Panc1 (cell line): ENCODE measurements at regions of chr17 and their contacts with region 1.

Region 1: DNA sequence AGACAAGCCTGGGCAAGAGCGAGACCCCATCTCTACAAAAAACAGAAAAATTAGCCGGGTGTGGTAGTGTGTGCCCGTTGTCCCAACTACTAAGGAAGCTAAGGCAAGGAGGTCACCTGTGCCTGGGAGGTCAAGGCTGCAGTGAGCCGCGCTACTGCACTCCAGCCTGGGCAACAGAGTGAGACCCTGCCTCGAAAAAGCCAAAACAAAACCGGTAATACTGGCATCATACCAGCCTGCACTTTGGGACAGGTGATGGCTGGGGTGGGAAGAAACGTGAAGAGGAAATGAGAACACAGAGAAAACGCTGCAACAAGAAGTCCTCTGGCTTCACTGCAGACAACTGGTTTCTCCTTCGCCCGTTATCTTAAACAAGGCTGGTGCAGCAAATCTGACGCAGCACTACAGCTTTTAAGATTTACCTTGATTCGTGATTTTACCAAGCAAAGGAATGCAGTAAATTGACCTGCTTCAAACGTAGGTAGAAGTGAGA is 725 bp upstream of the CASC3 start:
- DNase-seq: no peak
- ATAC-seq: peak; percentile 3
- H3K4me3 ChIP-seq: peak overlapping the region; percentile 68 to 93
- H3K27ac ChIP-seq: peak overlapping the region; percentile 96
- H3K4me1 ChIP-seq: peaks cover 15% of the 10 kb centered on the region
- H3K27me3 ChIP-seq: no peaks in the 10 kb centered on the region
- CTCF ChIP-seq: no peak

Region 2: GRCh38 chr17:40307001-40307730 is 167.6 kb after region 1 on chr17:
- CTCF ChIA-PET with region 1: no interaction called
- POLR2A ChIA-PET with region 1: no interaction called
- in situ Hi-C with region 1: no loop called
- intact Hi-C with region 1: no loop called
- DNase-seq: no peak
- ATAC-seq: peak; percentile 43
- H3K4me3 ChIP-seq: no peak overlapping the region
- H3K27ac ChIP-seq: peak overlapping the region; percentile 95
- H3K4me1 ChIP-seq: peaks cover 81% of the 10 kb centered on the region
- H3K27me3 ChIP-seq: no peaks in the 10 kb centered on the region
- CTCF ChIP-seq: no peak

Region 3: GRCh38 chr17:40317880-40318829 is 178.5 kb after region 1 on chr17:
- CTCF ChIA-PET with region 1: interaction called, 10 read pairs
- POLR2A ChIA-PET with region 1: no interaction called
- in situ Hi-C with region 1: no loop called
- intact Hi-C with region 1: no loop called
- DNase-seq: no peak
- ATAC-seq: peak; percentile 83
- H3K4me3 ChIP-seq: peak overlapping the region; percentile 72 to 87
- H3K27ac ChIP-seq: peak overlapping the region; percentile 91
- H3K4me1 ChIP-seq: peaks cover 77% of the 10 kb centered on the region
- H3K27me3 ChIP-seq: no peaks in the 10 kb centered on the region
- CTCF ChIP-seq: no peak